Activated CD4-positive, alpha-beta memory T cell treated with anti-CD3 and anti-CD28 coated beads, Interleukin-2, amount 10 ng/mL, durations not matched to agents 7 days and 5 days (primary cell): ENCODE measurements at regions of chr2 and their contacts with region 1.

Region 1: GRCh38 chr2:24046930-24047702 is at the start of gene WDCP:
- DNase-seq: peak; percentile 96
- H3K4me3 Mint-ChIP-seq: peak within 1 kb of the TSS; percentile 96
- H3K27ac Mint-ChIP-seq: peak within 1 kb of the TSS; percentile 85
- H3K4me1 Mint-ChIP-seq: peaks cover 41% of the 10 kb centered on the region
- H3K27me3 Mint-ChIP-seq: peaks cover 2% of the 10 kb centered on the region
- total RNA-seq, gene WDCP: 18.5 to 19.1 TPM

Region 2: DNA sequence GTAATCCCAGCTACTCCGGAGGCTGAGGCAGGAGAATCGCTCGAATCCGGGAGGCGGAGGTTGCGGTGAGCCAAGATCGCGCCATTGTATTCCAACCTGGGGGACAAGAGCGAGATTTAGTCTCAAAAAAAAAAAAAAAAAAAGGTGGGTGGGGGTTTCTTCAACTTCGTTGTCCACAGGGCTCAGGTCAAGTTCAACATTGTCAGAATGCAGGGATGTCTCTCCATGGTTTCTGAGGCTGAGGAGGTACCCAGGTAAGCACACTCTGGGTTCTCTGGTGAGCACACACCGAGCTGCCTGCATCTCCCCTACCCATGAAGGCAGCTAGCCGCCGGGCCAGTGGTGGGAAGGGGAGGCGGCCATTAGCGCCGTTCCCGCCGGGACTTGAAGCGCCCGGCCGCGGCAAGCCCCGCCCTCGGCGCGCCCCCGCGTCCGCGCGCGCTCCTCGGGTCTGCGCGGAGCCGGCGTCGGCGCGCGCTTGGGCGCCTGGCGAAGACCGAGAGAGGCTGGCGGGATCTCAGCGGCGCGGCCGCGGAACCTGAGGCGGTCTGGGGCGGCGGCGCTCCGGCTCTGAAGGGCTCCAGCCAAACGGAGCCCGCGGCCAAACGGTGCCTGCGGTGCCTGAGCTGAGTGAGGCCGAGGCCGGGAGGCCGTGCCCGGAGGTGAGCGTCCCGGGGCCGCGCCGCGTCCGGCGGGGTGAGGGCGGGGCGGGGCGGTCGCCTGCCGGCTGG is 107.0 kb before region 1 on chr2 and contains the start of gene UBXN2A:
- CTCF ChIA-PET with region 1: no interaction called
- POLR2A ChIA-PET with region 1: interaction called, 11 read pairs
- DNase-seq: peak; percentile 81
- H3K4me3 Mint-ChIP-seq: peak within 1 kb of the TSS; percentile 92
- H3K27ac Mint-ChIP-seq: peak within 1 kb of the TSS; percentile 84
- H3K4me1 Mint-ChIP-seq: peaks cover 24% of the 10 kb centered on the region
- H3K27me3 Mint-ChIP-seq: peaks cover 13% of the 10 kb centered on the region
- total RNA-seq, gene UBXN2A: 11.5 to 12.3 TPM

Region 3: DNA sequence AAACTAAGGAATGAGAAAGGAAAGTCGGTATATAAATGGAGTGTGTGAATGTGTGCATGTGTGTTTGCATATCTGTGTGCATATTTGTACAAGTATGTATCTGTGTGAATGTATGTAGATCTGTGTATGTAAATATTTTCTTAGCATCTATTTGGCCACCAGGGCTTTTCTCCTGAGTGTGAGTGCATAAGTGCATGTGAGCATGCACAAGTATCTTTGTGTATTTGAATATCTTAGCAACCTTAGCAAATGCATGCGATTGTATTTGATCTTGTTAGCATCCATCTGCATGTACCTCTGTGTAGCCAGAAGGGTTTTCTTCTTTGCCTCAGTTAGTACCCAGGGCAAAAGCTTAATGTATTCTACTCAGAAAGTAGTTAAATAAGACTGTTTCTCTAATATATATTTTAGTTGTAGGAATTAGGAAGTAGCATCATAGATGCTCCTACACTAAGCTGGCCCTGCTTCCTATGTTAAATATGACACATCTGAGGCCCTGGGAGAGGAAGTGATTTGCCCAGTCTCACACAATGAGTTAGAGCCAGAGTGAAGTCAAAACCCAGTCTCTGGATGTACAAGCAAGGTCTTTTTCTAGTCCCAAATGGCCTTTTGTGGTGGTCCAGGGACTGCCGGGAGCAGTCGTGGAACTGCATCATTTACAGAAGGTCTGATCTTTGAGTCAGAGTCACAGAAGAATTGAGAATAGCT is 11.6 kb after region 1 on chr2:
- CTCF ChIA-PET with region 1: interaction called, 10 read pairs
- POLR2A ChIA-PET with region 1: interaction called, 4 read pairs
- DNase-seq: no peak
- H3K4me3 Mint-ChIP-seq: no peak overlapping the region
- H3K27ac Mint-ChIP-seq: no peak overlapping the region
- H3K4me1 Mint-ChIP-seq: peaks cover 7% of the 10 kb centered on the region
- H3K27me3 Mint-ChIP-seq: no peaks in the 10 kb centered on the region

Region 4: GRCh38 chr2:24075915-24076848 is 29.1 kb after region 1 on chr2 and contains the start of gene SF3B6:
- CTCF ChIA-PET with region 1: interaction called, 4 read pairs
- POLR2A ChIA-PET with region 1: interaction called, 34 read pairs
- DNase-seq: peak; percentile 100
- H3K4me3 Mint-ChIP-seq: peak within 1 kb of the TSS; percentile 98
- H3K27ac Mint-ChIP-seq: peak within 1 kb of the TSS; percentile 96
- H3K4me1 Mint-ChIP-seq: peaks cover 38% of the 10 kb centered on the region
- H3K27me3 Mint-ChIP-seq: no peaks in the 10 kb centered on the region
- total RNA-seq, gene SF3B6: 87.4 to 88.2 TPM

Region 5: GRCh38 chr2:24175631-24176187 is 128.6 kb after region 1 on chr2:
- CTCF ChIA-PET with region 1: no interaction called
- POLR2A ChIA-PET with region 1: no interaction called
- DNase-seq: no peak
- H3K4me3 Mint-ChIP-seq: no peak overlapping the region
- H3K27ac Mint-ChIP-seq: no peak overlapping the region
- H3K4me1 Mint-ChIP-seq: peaks cover 9% of the 10 kb centered on the region
- H3K27me3 Mint-ChIP-seq: peaks cover 6% of the 10 kb centered on the region